ENCODE measurements at regions of chr11 and their contacts with region 1.

Region 1: GRCh38 chr11:118689851-118690552 is 10.6 kb upstream of the TREH start:
- DNase-seq: peak; percentile 65
- H3K4me3 ChIP-seq: peak overlapping the region; percentile 19
- H3K27me3 ChIP-seq: no peaks in the 10 kb centered on the region
- CTCF ChIP-seq: peak; percentile 86

Region 2: DNA sequence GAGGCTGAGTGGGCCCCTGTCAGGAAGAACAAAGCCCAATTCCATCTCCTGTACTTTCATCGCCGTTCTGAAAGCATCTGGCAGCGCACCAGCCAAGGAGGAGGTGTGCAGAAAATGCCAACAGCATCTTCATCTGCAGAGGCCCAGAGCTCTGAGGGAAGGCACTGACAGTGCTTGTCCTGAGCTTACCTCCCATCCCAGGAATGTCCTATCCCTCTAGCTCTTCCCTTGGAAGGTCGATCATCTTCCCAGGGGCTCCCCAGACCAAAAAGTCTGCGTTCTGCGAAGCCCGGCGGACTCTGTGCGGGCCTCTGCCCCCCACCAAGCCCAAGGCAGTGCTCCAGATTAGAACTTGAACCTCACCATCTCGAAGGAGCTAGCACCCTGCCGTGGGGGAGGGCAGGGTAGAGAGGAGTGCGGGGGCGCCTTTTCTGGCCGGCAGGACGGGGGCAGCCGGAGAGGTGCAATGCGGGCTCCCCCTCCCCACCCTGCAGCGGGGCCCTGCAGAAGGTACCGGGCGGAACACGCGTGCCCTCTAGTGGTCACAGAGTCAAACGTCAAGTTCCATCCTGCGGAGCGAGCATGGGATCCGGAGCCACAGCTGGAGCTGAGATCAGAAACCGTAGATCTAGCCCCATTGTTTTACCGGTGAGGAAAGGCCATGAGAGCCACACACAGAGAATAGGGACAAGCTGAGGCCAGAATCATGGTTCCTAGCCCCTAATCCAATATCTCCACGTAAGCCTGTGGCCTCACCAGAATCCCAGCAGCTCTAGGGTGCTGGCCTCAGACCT is 518.5 kb before region 1 on chr11:
- CTCF ChIA-PET with region 1: no interaction called
- POLR2A ChIA-PET with region 1: no interaction called
- DNase-seq: no peak
- H3K4me3 ChIP-seq: no peak overlapping the region
- H3K27me3 ChIP-seq: peaks cover 20% of the 10 kb centered on the region
- CTCF ChIP-seq: peak; percentile 93

Region 3: DNA sequence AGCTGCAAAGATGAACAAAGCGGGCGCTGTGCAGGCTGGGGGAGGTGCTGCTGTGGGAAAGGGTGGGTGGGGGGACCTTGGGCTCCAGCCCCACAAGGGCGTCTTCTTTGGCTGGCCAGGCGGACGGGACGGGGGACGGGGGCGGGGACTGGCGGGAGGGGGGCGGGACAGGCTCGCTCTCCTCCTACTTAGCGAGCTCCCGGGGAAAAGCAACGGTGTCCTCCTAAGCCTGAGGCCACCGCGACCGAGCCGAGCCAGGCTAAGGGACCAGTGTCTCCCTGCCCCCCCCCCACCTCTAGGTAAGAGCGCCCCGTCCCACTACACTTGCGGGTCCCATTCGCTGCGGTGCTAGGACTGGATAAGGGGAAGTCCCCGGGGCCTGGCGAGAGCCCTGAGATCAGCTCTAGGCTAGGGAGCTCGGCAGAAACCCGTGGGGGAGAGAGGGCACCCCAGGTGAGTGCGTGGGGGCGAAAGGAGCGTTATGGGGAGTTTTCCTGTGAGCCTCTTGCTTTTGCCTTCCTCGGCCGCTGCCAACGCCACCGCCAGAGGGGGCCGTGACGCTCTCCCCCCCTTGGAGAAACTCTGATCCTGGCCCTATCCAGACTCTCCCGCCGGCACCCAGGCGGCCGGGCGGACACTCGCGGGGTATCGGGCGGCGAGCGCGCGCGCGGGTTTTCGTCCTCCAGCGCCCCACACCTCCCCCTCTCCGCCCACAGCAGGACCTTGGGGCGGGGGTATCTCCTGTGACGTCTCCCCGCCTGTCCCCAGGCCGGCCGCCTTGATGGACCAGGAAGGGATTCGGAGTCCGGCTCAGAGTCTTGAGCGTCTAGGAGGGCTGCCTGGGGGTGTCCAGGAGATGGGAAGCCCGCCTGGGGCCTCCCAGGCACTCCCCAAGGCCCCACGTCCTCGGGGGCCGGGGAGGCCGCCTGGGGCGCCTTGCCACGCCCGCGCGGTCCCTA is 82.3 kb before region 1 on chr11 and contains the start of gene PHLDB1:
- CTCF ChIA-PET with region 1: no interaction called
- POLR2A ChIA-PET with region 1: no interaction called
- DNase-seq: no peak
- H3K4me3 ChIP-seq: peak within 1 kb of the TSS; percentile 68
- H3K27me3 ChIP-seq: no peaks in the 10 kb centered on the region
- CTCF ChIP-seq: peak; percentile 79
- polyA plus RNA-seq, gene PHLDB1: 51.1 and 74.7 TPM in 2 replicates

Region 4: DNA sequence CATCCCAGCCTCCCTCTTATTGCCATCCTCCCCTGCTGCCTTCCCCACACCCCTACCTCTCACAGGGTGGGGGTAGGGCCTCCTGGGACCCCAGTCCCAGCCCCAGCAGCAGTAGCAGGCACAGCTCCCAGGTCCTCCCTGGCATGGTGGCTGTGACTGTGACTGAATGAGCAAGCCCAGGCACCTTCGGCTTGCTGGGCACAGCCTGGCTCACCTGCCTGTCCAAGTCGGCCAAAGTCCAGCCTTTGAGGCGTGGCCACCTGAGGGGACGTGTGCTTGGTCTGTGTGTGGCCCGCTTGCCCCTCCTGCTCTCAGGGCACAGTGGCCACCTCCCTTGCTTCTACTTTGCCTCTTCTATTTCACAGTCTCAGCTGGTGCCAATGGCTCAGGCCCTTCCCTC is 10.5 kb before region 1 on chr11 and contains the start of gene TREH:
- CTCF ChIA-PET with region 1: interaction called, 15 read pairs
- POLR2A ChIA-PET with region 1: no interaction called
- DNase-seq: no peak
- H3K4me3 ChIP-seq: no peak within 1 kb of the TSS
- H3K27me3 ChIP-seq: peaks cover 6% of the 10 kb centered on the region; the same call in 1 of the 2 replicates
- CTCF ChIP-seq: no peak
- polyA plus RNA-seq, gene TREH: not detected in 2 replicates

Region 5: GRCh38 chr11:118768690-118769089 is 78.7 kb after region 1 on chr11:
- CTCF ChIA-PET with region 1: interaction called, 14 read pairs
- POLR2A ChIA-PET with region 1: no interaction called
- DNase-seq: no peak
- H3K4me3 ChIP-seq: no peak overlapping the region
- H3K27me3 ChIP-seq: no peaks in the 10 kb centered on the region
- CTCF ChIP-seq: no peak

Region 6: DNA sequence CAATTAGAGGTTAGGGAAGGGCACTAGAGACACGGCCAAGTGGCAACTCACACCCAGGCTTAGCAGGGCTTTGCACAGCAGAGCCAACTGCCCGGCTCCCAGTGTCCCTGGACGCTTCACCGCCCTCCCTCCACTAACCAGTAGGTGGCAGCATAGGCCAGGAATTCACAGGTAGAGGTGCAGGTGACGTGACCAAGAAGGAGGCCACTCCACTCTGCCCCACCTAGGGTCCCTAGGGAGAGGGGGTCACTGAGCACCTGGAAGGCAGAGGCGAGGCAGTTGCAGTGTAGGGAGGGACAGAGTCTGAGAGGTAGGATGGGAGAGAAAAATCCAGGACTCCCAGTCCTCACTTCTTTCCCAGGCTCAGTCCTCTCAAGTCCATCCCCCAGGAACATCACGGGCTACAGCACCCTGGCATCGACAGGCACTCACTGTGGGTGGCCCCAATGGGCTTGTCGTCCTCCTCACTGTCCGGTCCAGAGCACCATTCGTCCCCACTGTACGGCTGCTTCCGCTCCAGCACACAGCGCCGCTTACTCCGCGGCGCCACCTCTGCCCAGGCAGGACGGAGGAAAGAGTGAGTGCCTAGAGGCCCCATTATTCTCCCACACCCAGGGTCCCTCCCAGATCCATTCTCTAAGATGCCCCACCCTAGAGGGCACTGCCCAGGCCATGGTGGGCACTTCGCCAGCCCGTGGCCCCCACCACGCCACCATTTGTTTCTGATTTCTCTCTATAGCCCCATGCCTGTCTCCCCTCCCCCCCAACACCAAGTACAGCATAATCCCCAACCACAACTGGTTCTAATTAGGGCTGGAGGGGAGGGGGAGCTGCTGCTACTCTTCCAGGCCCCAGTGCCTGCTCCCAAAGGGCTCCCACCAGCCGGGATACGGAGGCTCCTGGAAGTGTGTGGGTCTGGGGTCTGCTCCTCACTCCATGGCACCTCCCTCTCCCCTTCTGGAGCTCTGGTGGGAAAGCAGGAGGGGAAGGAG is 217.3 kb after region 1 on chr11:
- CTCF ChIA-PET with region 1: interaction called, 10 read pairs
- POLR2A ChIA-PET with region 1: no interaction called
- DNase-seq: no peak
- H3K4me3 ChIP-seq: peak overlapping the region; percentile 24
- H3K27me3 ChIP-seq: no peaks in the 10 kb centered on the region
- CTCF ChIP-seq: peak; percentile 88

Region 7: GRCh38 chr11:118928108-118928870 is 238.3 kb after region 1 on chr11:
- CTCF ChIA-PET with region 1: interaction called, 108 read pairs
- POLR2A ChIA-PET with region 1: no interaction called
- DNase-seq: no peak
- H3K4me3 ChIP-seq: peak overlapping the region; percentile 72
- H3K27me3 ChIP-seq: no peaks in the 10 kb centered on the region
- CTCF ChIP-seq: peak; percentile 92

Region 8: GRCh38 chr11:118939953-118940598 is 250.1 kb after region 1 on chr11:
- CTCF ChIA-PET with region 1: interaction called, 13 read pairs
- POLR2A ChIA-PET with region 1: no interaction called
- DNase-seq: no peak
- H3K4me3 ChIP-seq: no peak overlapping the region
- H3K27me3 ChIP-seq: peaks cover 2% of the 10 kb centered on the region
- CTCF ChIP-seq: no peak

Region 9: GRCh38 chr11:118956094-118956846 is 266.3 kb after region 1 on chr11 and contains the start of gene UPK2:
- CTCF ChIA-PET with region 1: interaction called, 136 read pairs
- POLR2A ChIA-PET with region 1: interaction called, 3 read pairs
- DNase-seq: no peak
- H3K4me3 ChIP-seq: no peak within 1 kb of the TSS
- H3K27me3 ChIP-seq: peaks cover 19% of the 10 kb centered on the region
- CTCF ChIP-seq: peak; percentile 95
- polyA plus RNA-seq, gene UPK2: 0.18 and 0.20 TPM in 2 replicates

Region 10: GRCh38 chr11:119222308-119222707 is 532.3 kb after region 1 on chr11:
- CTCF ChIA-PET with region 1: no interaction called
- POLR2A ChIA-PET with region 1: no interaction called
- DNase-seq: peak; percentile 31
- H3K4me3 ChIP-seq: no peak overlapping the region
- H3K27me3 ChIP-seq: no peaks in the 10 kb centered on the region
- CTCF ChIP-seq: no peak